ENCODE measurements at regions of chr5 and their contacts with region 1.

Region 1: DNA sequence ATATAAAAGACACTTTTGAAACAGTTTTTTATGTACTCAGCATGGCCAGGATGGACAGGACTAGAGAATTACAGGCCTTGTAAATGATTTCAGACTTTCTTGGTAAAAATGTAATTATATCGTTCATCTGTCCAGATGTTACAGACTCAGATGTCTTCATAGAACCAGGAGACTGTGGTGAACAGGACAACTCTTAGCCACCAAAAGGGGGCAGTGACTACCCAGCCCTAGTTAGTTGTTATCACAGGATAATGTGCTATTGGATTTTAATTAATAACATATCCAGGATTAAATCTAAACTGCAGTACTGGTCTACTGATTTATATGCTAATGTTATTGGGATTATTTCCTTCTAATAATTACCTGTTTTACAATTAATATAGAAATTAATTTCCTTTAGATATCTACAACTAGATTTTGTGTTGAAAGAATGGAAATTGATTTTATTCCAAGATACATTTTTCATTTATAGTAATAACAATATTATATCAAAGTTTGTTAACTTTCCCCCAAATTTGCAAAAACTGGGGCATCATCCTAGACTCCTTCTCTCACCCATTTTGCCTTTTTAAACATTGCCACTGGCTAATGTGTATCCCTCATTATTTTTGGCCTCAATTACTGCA is 99.4 kb downstream of the MTREX start:
- DNase-seq: no peak
- ATAC-seq: peak; percentile 79
- H3K4me3 ChIP-seq: no peak overlapping the region
- H3K27ac ChIP-seq: no peak overlapping the region
- H3K4me1 ChIP-seq: no peaks in the 10 kb centered on the region
- H3K27me3 ChIP-seq: no peaks in the 10 kb centered on the region

Region 2: GRCh38 chr5:55344392-55344992 is 62.7 kb before region 1 on chr5:
- intact Hi-C with region 1: loop called (anchors 10 kb)
- DNase-seq: no peak
- ATAC-seq: no peak
- H3K4me3 ChIP-seq: no peak overlapping the region
- H3K27ac ChIP-seq: peak overlapping the region in 1 of 2 donors; percentile 67
- H3K4me1 ChIP-seq: peaks cover 0 to 2% of the 10 kb centered on the region in 2 donors
- H3K27me3 ChIP-seq: no peaks in the 10 kb centered on the region

Measured in aorta (tissue), 5 donors.